Astrocyte of the cerebellum (primary cell): ENCODE measurements at regions of chr3 and their contacts with region 1.

Region 1: DNA sequence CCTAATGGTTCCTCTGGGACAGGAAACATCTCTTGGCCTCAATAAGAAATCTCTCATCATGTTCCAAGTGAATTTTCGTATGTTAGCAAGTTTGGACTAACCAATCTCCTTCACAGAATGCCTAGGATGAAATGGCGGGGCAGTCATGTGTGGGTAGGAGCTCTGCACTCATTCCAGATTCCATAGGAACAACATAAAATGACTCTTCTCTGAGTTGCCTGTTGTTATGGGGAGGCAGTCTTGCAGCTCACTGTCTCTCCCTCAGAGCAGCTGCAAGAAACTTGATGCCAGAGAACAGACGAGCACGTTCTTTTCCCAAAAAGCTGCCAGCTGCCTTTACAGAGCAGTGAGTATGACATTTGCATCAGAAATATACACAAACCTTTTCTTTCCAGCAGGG is 34.1 kb downstream of the SPATA12 start:
- DNase-seq: no peak
- H3K4me3 ChIP-seq: no peak overlapping the region
- CTCF ChIP-seq: no peak

Region 2: DNA sequence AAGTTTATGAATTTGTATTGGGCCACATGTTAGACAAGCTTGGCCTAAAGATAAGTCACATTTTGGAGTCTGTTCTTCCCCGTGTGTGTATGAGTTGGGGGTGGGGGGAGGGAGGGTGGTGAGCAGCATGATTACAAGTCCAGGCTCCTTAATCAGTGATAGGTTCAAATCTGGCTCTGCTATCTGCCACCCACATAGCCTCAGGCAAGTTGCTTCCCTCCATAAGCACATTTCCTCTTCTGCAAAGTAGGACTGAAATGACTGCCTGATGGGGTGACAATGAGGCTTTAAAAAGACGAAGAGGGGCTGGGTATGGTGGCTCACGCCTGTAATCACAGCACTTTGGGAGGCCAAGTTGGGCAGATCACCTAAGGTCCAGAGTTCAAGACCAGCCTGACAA is 35.2 kb before region 1 on chr3:
- in situ Hi-C with region 1: no loop called
- DNase-seq: no peak
- H3K4me3 ChIP-seq: no peak overlapping the region
- CTCF ChIP-seq: no peak

Region 3: DNA sequence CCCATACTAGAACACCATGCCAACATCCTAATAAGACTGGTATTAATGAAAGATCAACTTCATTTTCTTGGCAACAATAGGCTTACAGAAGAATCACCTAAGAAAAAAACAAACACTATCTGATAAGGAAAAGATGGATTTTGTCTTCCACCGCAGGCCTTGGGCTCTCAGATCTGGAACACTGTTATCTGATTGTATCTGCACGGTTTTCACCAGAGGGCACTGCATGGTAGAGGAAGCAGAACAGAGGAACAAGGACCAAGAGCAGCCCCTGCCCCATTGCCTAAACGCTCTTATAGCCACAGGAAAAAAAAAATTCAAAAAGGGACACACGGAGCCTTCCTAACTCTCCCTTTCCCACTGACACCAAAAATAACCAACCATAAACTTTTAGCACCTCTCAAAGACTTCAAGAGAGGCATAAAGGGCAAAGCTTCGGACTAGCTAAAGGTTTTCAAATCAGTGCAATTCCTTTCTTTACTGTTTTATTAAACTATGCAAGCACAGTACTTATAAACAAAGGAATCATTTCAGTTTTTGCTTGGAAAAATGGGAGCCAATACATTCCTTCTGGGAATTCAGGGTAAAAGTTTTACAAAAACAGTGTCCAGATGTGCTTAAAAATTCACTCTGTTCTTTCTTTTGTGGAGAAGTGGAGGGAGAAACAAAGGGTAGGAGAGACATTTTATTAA is 47.3 kb after region 1 on chr3:
- in situ Hi-C with region 1: loop called (anchors 5 kb)
- DNase-seq: no peak
- H3K4me3 ChIP-seq: no peak overlapping the region
- CTCF ChIP-seq: peak; percentile 26